ENCODE measurements at regions of chr20 and their contacts with region 1.

Region 1: DNA sequence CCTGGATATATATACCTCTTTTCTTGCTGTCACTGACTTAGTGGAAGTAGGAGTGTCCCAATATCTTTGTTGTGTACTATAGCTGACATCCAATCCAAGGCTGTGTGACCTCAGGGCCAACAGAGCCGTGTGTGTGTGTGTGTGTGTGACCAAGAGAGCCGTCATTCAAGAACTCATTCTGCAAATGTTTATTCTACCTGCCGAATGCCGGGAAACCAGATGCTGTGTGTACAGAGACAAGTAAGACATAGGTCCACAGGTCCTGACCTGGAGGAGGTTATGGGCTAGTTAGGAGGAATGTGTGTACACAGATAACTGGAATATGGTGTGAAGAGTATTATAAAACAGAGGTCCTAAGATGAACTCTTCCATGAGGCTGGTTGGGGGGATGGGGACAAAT is 190.0 kb downstream of the DHX35 start:
- DNase-seq: no peak
- ATAC-seq: no peak
- H3K4me3 ChIP-seq: no peak overlapping the region
- H3K27ac ChIP-seq: no peak overlapping the region
- H3K4me1 ChIP-seq: no peaks in the 10 kb centered on the region
- H3K27me3 ChIP-seq: peaks cover 0 to 10% (median 0%) of the 10 kb centered on the region in 7 donors
- CTCF ChIP-seq: no peak

Region 2: GRCh38 chr20:39214828-39215227 is 62.7 kb after region 1 on chr20:
- intact Hi-C with region 1: loop called in 1 of 10 experiments (anchors 10 kb)
- DNase-seq: no peak
- ATAC-seq: no peak
- H3K4me3 ChIP-seq: no peak overlapping the region
- H3K27ac ChIP-seq: no peak overlapping the region
- H3K4me1 ChIP-seq: no peaks in the 10 kb centered on the region
- H3K27me3 ChIP-seq: peaks cover 0 to 5% (median 0%) of the 10 kb centered on the region in 7 donors
- CTCF ChIP-seq: no peak